Gastrocnemius medialis (tissue), 4 donors: ENCODE measurements at regions of chr7 and their contacts with region 1.

Region 1: GRCh38 chr7:99837649-99838361 is 10.0 kb downstream of the CYP3A43 start:
- DNase-seq: no peak
- ATAC-seq: peak; percentile 39 to 42
- H3K4me3 ChIP-seq: no peak overlapping the region
- H3K27ac ChIP-seq: no peak overlapping the region
- H3K4me1 ChIP-seq: no peaks in the 10 kb centered on the region
- H3K27me3 ChIP-seq: no peaks in the 10 kb centered on the region
- CTCF ChIP-seq: peak in 1 of 5 experiments; percentile 26
- POLR2A ChIP-seq: no peak

Region 2: GRCh38 chr7:99631295-99632109 is 206.3 kb before region 1 on chr7:
- in situ Hi-C with region 1: loop called in 1 of 4 experiments (anchors 25 kb)
- intact Hi-C with region 1: loop called (anchors 1 kb)
- DNase-seq: peak; percentile 48 to 78
- ATAC-seq: peak; percentile 96 to 98
- H3K4me3 ChIP-seq: no peak overlapping the region
- H3K27ac ChIP-seq: peak overlapping the region; percentile 67 to 82 (median 71)
- H3K4me1 ChIP-seq: peaks cover 10 to 17% of the 10 kb centered on the region in 2 donors
- H3K27me3 ChIP-seq: no peaks in the 10 kb centered on the region
- CTCF ChIP-seq: peak; percentile 40 to 61 (median 52)
- POLR2A ChIP-seq: no peak

Region 3: DNA sequence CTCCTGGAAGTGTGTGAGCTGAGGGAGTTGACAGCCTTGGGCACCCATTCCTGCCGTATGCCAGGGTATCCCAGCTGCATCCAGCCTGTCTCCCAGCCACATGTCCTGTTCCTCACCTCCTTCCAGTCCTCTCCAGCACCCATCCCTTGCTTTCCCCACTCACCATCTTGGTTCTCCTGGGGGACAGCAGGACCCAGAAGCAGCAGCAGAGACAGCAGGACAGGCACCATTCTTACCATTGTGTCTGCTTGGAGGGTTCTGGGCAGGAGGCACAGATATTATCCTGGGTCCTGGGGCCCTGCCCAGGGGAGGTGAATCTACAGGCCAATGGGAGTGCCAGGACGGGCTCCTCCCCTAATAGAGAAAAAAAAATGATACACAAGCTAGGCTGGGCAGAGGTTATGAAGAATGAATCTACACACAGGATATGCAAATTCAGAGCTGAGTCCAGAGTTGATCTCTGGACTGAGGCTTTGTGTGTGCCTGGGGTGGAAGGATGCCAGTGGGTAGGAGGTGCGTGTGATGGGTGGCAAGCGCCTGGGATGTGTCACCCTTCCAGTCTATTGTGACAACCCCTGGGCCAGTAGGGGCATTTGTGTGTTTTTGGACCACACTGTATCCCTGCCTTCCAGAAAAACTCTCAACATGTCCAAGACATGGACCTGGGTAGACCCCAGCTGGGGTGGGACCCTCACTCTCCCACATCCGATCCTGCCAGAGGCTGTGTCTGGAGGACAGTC is 138.1 kb after region 1 on chr7 and contains the start of gene AZGP1:
- in situ Hi-C with region 1: no loop called
- intact Hi-C with region 1: no loop called
- DNase-seq: no peak
- ATAC-seq: no peak
- H3K4me3 ChIP-seq: no peak within 1 kb of the TSS
- H3K27ac ChIP-seq: no peak within 1 kb of the TSS
- H3K4me1 ChIP-seq: no peaks in the 10 kb centered on the region
- H3K27me3 ChIP-seq: peaks cover 0 to 2% (median 0%) of the 10 kb centered on the region in 3 donors
- CTCF ChIP-seq: no peak
- POLR2A ChIP-seq: no peak
- total RNA-seq, gene AZGP1: 2.6 to 10.3 (median 4.2) TPM in 3 of 4 donors, not detected in the other

Region 4: DNA sequence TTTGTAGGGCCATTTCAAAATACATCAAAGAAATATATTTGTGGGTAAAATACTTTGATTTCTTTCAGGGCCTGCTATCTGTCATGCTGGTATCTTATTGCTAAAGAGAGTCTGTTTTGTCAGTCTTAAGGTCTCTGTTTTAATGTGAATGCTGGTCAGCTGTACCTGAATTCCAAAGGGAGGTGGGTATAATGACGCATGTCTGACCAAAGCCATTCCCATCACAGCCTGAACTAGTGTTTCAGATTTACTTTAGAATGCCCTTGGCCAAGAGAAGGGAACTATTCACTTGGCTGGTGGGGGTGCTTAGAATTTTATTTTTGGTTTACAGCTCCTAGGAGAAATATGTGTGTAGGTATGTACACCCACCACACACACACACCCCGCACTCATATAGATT is 1821.9 kb after region 1 on chr7:
- in situ Hi-C with region 1: no loop called
- intact Hi-C with region 1: no loop called
- DNase-seq: no peak
- ATAC-seq: no peak
- H3K4me3 ChIP-seq: no peak overlapping the region
- H3K27ac ChIP-seq: no peak overlapping the region
- H3K4me1 ChIP-seq: no peaks in the 10 kb centered on the region
- H3K27me3 ChIP-seq: no peaks in the 10 kb centered on the region
- CTCF ChIP-seq: no peak
- POLR2A ChIP-seq: no peak